Endothelial cell of umbilical vein (primary cell): ENCODE measurements at regions of chr17 and their contacts with region 1.

Region 1: GRCh38 chr17:60036796-60037612 is 41.7 kb downstream of the HEATR6 start:
- DNase-seq: peak; percentile 75
- H3K4me3 ChIP-seq: no peak overlapping the region
- H3K27ac ChIP-seq: no peak overlapping the region
- H3K4me1 ChIP-seq: peaks cover 4% of the 10 kb centered on the region
- H3K27me3 ChIP-seq: peaks cover 4 to 13% of the 10 kb centered on the region in 2 experiments
- CTCF ChIP-seq: peak; percentile 96 to 97
- POLR2A ChIP-seq: no peak

Region 2: GRCh38 chr17:59311130-59311920 is 725.7 kb before region 1 on chr17:
- CTCF ChIA-PET with region 1: interaction called, 9 read pairs
- POLR2A ChIA-PET with region 1: no interaction called
- dilution Hi-C with region 1: no loop called
- intact Hi-C with region 1: loop called (anchors 10 kb)
- DNase-seq: peak; percentile 79
- H3K4me3 ChIP-seq: no peak overlapping the region
- H3K27ac ChIP-seq: no peak overlapping the region
- H3K4me1 ChIP-seq: no peaks in the 10 kb centered on the region
- H3K27me3 ChIP-seq: no peaks in the 10 kb centered on the region
- CTCF ChIP-seq: peak; percentile 64 to 67
- POLR2A ChIP-seq: no peak

Region 3: GRCh38 chr17:59746849-59747445 is 290.1 kb before region 1 on chr17:
- CTCF ChIA-PET with region 1: interaction called, 4 read pairs
- POLR2A ChIA-PET with region 1: no interaction called
- dilution Hi-C with region 1: no loop called
- intact Hi-C with region 1: loop called (anchors 10 kb)
- DNase-seq: peak; percentile 68
- H3K4me3 ChIP-seq: no peak overlapping the region
- H3K27ac ChIP-seq: no peak overlapping the region
- H3K4me1 ChIP-seq: no peaks in the 10 kb centered on the region
- H3K27me3 ChIP-seq: no peaks in the 10 kb centered on the region
- CTCF ChIP-seq: peak; percentile 30 to 43
- POLR2A ChIP-seq: no peak

Region 4: GRCh38 chr17:59964482-59965328 is 72.3 kb before region 1 on chr17 and contains the start of gene RNFT1:
- CTCF ChIA-PET with region 1: interaction called, 4 read pairs
- POLR2A ChIA-PET with region 1: no interaction called
- dilution Hi-C with region 1: no loop called
- intact Hi-C with region 1: loop called (anchors 10 kb)
- DNase-seq: peak; percentile 78
- H3K4me3 ChIP-seq: peak within 1 kb of the TSS; percentile 79 to 96 (median 88)
- H3K27ac ChIP-seq: peak within 1 kb of the TSS; percentile 70
- H3K4me1 ChIP-seq: peaks cover 9% of the 10 kb centered on the region
- H3K27me3 ChIP-seq: no peaks in the 10 kb centered on the region
- CTCF ChIP-seq: no peak
- POLR2A ChIP-seq: peak; percentile 86
- total RNA-seq, gene RNFT1: 16.2 and 16.6 TPM in 2 replicates

Region 5: DNA sequence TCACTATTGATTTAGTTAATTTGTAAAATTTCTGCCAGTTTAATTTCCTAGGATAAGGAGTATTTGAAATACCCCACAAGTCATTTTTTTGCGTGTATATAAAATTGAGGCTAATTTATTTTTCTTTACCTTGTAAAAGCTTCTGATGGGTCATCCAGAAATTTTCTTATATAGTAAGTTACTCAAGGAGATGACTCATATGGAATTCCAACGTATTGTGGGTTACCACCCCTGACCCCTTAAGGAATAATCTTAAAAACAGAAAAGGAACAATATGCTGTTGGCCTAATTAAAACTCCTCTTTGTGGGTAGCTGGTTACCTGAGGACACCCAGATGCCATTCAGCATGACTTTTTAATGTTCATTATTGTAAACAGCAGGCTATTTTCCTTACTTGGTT is 28.1 kb after region 1 on chr17:
- CTCF ChIA-PET with region 1: interaction called, 10 read pairs
- POLR2A ChIA-PET with region 1: no interaction called
- dilution Hi-C with region 1: no loop called
- intact Hi-C with region 1: no loop called
- DNase-seq: peak; percentile 10
- H3K4me3 ChIP-seq: no peak overlapping the region
- H3K27ac ChIP-seq: peak overlapping the region; percentile 15
- H3K4me1 ChIP-seq: peaks cover 21% of the 10 kb centered on the region
- H3K27me3 ChIP-seq: no peaks in the 10 kb centered on the region
- CTCF ChIP-seq: no peak
- POLR2A ChIP-seq: no peak